Activated naive CD4-positive, alpha-beta T cell treated with anti-CD3 and anti-CD28 coated beads for 36 hours (primary cell): ENCODE measurements at regions of chr21 and their contacts with region 1.

Region 1: GRCh38 chr21:15483138-15483780 is 246.5 kb upstream of the USP25 start:
- DNase-seq: peak; percentile 89
- H3K4me3 Mint-ChIP-seq: no peak overlapping the region
- H3K27ac Mint-ChIP-seq: no peak overlapping the region
- H3K4me1 Mint-ChIP-seq: peaks cover 27% of the 10 kb centered on the region
- H3K27me3 Mint-ChIP-seq: no peaks in the 10 kb centered on the region

Region 2: GRCh38 chr21:14259747-14260146 is 1223.5 kb before region 1 on chr21:
- CTCF ChIA-PET with region 1: no interaction called
- intact Hi-C with region 1: loop called (anchors 5 kb)
- DNase-seq: no peak
- H3K4me3 Mint-ChIP-seq: no peak overlapping the region
- H3K27ac Mint-ChIP-seq: no peak overlapping the region
- H3K4me1 Mint-ChIP-seq: peaks cover 8% of the 10 kb centered on the region
- H3K27me3 Mint-ChIP-seq: no peaks in the 10 kb centered on the region

Region 3: DNA sequence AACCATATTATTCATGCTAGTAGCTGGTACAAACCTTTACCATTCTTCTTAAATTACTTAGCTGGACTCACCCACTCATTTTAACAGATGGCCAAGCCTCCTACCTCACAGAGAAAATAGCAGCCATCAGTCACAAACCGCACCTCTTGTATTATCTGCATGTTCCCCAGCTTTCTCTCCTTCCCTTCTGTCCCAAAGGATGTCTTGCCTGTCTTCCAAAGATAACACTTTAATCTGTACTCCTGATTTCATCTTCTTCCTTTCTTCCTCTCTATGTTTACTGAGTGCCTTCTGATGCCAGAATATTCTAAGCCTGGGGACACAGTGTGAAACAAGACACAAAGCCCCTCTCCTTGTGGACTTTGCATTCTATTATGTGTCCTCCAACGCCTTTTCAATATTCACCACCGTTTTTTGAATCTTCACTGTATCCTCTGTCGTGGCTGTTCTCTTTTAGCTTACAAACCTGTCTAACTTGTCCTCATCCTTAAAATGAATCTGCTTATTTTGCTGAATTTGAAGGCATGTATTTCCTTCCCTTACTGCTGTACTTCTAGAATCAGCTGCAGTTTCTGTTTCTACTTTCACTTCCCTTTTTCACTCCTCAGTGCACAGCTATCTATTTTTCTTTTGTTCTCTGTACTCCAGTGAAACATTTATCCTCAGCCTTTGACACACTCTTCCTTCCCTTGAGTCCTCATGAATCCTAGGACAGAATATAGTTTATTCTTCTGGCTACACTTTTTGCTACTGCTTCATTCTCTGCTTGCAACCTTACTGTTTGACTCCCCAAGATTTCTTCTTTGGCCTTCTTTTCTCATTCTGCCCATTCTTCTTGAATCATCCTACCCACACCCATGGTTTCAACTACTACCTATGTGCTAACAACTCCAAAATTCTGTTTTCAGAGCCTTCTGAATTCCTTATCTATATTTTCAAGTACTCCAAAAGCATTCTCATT is 720.2 kb before region 1 on chr21:
- CTCF ChIA-PET with region 1: interaction called, 3 read pairs
- intact Hi-C with region 1: loop called (anchors 10 kb)
- DNase-seq: no peak
- H3K4me3 Mint-ChIP-seq: no peak overlapping the region
- H3K27ac Mint-ChIP-seq: no peak overlapping the region
- H3K4me1 Mint-ChIP-seq: no peaks in the 10 kb centered on the region
- H3K27me3 Mint-ChIP-seq: no peaks in the 10 kb centered on the region

Region 4: GRCh38 chr21:15064576-15065391 is 418.5 kb before region 1 on chr21 and contains the start of gene NRIP1:
- CTCF ChIA-PET with region 1: interaction called, 4 read pairs
- intact Hi-C with region 1: loop called (anchors 1 kb)
- DNase-seq: peak; percentile 71
- H3K4me3 Mint-ChIP-seq: peak within 1 kb of the TSS; percentile 90
- H3K27ac Mint-ChIP-seq: peak within 1 kb of the TSS; percentile 94
- H3K4me1 Mint-ChIP-seq: peaks cover 36% of the 10 kb centered on the region
- H3K27me3 Mint-ChIP-seq: no peaks in the 10 kb centered on the region
- total RNA-seq, gene NRIP1: 6.1 to 6.5 TPM

Region 5: GRCh38 chr21:15408089-15408488 is 75.2 kb before region 1 on chr21:
- CTCF ChIA-PET with region 1: interaction called, 12 read pairs
- intact Hi-C with region 1: no loop called
- DNase-seq: no peak
- H3K4me3 Mint-ChIP-seq: no peak overlapping the region
- H3K27ac Mint-ChIP-seq: no peak overlapping the region
- H3K4me1 Mint-ChIP-seq: no peaks in the 10 kb centered on the region
- H3K27me3 Mint-ChIP-seq: no peaks in the 10 kb centered on the region

Region 6: GRCh38 chr21:15446193-15446592 is 37.1 kb before region 1 on chr21:
- CTCF ChIA-PET with region 1: no interaction called
- intact Hi-C with region 1: no loop called
- DNase-seq: no peak
- H3K4me3 Mint-ChIP-seq: no peak overlapping the region
- H3K27ac Mint-ChIP-seq: no peak overlapping the region
- H3K4me1 Mint-ChIP-seq: peaks cover 3% of the 10 kb centered on the region
- H3K27me3 Mint-ChIP-seq: no peaks in the 10 kb centered on the region

Region 7: DNA sequence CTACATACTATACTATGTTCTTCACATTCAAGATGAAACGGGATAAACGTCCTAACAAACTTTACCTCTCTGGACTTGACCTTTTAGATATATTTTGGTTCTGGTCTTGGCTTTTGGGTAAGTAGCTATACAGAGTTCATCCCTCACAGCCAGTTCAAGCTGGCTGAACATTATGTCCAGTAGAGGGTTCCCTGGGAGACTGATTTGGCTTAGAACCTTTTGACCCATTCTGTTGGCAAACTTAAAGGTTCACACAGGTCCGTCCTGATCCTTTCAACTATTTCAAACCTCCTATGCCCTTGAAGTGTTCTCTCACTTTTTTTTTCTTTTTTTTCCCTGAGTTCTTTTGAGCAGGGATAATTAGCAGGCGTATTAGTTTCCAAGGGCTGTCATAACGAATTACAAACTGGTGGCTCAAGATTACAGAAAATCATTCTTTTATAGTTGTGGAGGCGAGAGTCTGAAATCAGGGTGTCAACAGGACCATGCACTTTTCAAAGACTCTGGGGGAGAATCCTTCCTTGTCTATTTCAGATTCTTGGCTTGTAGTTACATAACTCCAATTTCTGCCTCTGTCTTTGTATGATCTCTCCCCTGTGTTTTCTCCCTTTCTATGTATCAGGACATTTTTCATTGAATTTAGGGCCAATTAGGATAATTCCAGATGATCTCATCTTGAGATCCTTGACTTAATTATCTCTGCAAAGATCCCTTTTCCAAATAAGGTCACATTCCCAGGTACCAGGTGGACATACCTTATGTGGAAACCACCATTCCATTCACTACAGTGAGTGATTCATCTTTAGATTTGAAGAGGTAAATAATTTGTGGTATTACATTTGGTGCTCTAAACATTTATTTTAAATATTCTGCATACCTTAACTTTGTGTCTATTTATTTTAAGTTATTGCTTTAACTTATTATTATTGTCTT is 10.9 kb before region 1 on chr21:
- CTCF ChIA-PET with region 1: interaction called, 10 read pairs
- intact Hi-C with region 1: no loop called
- DNase-seq: no peak
- H3K4me3 Mint-ChIP-seq: no peak overlapping the region
- H3K27ac Mint-ChIP-seq: no peak overlapping the region
- H3K4me1 Mint-ChIP-seq: peaks cover 6% of the 10 kb centered on the region
- H3K27me3 Mint-ChIP-seq: no peaks in the 10 kb centered on the region

Region 8: GRCh38 chr21:15560383-15561056 is 77.3 kb after region 1 on chr21:
- CTCF ChIA-PET with region 1: no interaction called
- intact Hi-C with region 1: no loop called
- DNase-seq: no peak
- H3K4me3 Mint-ChIP-seq: no peak overlapping the region
- H3K27ac Mint-ChIP-seq: no peak overlapping the region
- H3K4me1 Mint-ChIP-seq: peaks cover 9% of the 10 kb centered on the region
- H3K27me3 Mint-ChIP-seq: no peaks in the 10 kb centered on the region

Region 9: GRCh38 chr21:15592271-15592860 is 109.1 kb after region 1 on chr21:
- CTCF ChIA-PET with region 1: interaction called, 3 read pairs
- intact Hi-C with region 1: loop called (anchors 2 kb)
- DNase-seq: peak; percentile 5
- H3K4me3 Mint-ChIP-seq: no peak overlapping the region
- H3K27ac Mint-ChIP-seq: no peak overlapping the region
- H3K4me1 Mint-ChIP-seq: no peaks in the 10 kb centered on the region
- H3K27me3 Mint-ChIP-seq: no peaks in the 10 kb centered on the region

Region 10: DNA sequence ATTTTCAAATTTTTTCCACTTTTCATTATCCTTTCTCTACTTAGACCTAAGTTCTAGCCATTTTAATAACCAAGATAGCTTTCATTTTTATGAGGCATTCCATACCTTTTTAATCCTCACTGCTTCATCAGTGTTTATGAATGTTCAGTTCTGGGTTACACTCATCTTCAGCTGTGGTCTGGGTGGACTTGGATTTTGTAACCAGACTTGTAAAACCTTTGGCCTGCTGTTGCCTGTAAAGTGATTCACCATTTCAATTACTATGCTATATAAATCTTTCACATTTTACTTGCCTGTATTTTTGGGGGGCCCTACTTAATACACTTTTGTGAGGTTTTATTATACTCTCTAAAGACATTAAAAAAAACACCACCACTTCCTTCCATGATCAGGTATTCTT is 292.7 kb after region 1 on chr21:
- CTCF ChIA-PET with region 1: no interaction called
- intact Hi-C with region 1: no loop called
- DNase-seq: no peak
- H3K4me3 Mint-ChIP-seq: no peak overlapping the region
- H3K27ac Mint-ChIP-seq: no peak overlapping the region
- H3K4me1 Mint-ChIP-seq: peaks cover 21% of the 10 kb centered on the region
- H3K27me3 Mint-ChIP-seq: no peaks in the 10 kb centered on the region